ENCODE measurements at regions of chr14 and their contacts with region 1.

Region 1: GRCh38 chr14:57486767-57487379 is 6.8 kb downstream of the CCDC198 start:
- DNase-seq: peak; percentile 62
- H3K4me3 ChIP-seq: no peak overlapping the region
- H3K27ac ChIP-seq: no peak overlapping the region
- H3K4me1 ChIP-seq: no peaks in the 10 kb centered on the region
- H3K27me3 ChIP-seq: peaks cover 42% of the 10 kb centered on the region

Region 2: DNA sequence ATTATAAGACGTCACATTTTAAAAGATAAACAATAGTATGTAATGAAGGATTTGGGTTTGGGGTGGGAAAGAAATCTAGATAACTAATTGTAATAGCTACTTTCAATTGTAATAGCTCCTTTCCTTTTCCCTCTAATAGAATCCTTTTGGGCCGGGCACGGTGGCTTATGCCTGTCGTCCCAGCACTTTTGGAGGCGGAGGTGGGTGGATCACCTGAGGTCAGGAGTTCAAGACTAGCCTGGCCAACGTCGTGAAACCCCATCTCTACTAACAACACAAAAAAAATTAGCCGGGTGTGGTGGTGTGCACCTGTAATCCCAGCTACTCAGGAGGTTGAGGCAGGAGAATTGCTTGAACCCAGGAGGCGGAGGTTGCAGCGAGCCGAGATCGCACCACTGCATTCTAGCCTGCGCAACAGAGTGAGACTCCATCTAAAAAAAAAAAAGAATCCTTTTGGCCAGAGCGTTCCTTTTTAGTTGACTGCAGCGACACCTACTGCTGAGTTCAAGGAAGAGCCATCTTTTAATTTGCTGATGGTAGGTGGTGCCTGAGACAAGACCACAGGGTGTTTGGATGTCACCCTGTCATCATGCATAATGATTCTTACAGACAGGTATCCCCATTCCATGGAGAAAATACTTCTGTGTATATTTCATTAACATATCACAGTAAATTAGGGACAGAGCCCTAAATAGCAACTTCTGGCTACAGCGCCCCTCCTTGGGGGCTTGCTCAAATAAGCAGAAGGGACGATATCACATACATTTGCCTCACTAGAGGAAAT is 585.6 kb after region 1 on chr14:
- in situ Hi-C with region 1: loop called (anchors 25 kb)
- DNase-seq: peak; percentile 78
- H3K4me3 ChIP-seq: peak overlapping the region; percentile 59
- H3K27ac ChIP-seq: no peak overlapping the region
- H3K4me1 ChIP-seq: peaks cover 9% of the 10 kb centered on the region
- H3K27me3 ChIP-seq: no peaks in the 10 kb centered on the region

Measured in GM23248 (cell line).